Activated CD4-positive, alpha-beta T cell treated with anti-CD3 and anti-CD28 coated beads for 36 hours (primary cell): ENCODE measurements at regions of chr12 and their contacts with region 1.

Region 1: GRCh38 chr12:118404876-118405521 is 28.6 kb downstream of the SUDS3 start:
- DNase-seq: peak; percentile 80
- ATAC-seq: peak; percentile 57
- H3K4me3 Mint-ChIP-seq: no peak overlapping the region
- H3K27ac Mint-ChIP-seq: no peak overlapping the region
- H3K4me1 Mint-ChIP-seq: no peaks in the 10 kb centered on the region
- H3K27me3 Mint-ChIP-seq: no peaks in the 10 kb centered on the region

Region 2: DNA sequence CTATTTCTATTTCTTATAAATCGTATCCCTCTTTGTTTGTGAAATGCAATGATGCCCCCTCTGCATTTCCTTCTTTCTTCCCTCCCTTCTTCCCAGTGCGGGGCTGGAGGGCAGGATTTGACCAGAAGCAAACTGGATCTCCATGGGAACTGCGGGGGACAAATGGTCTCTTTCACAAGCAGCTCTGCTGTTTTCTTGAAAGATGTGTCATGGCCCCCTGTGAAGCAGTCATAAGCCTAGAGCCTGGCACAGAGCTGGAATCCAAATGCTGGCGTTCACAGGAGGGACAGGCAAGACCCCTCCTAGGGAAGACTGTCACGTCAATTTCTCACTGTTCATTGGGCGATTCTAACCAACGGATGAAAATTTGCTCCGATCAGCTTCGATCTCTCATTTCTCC is 840.1 kb before region 1 on chr12:
- CTCF ChIA-PET with region 1: no interaction called
- POLR2A ChIA-PET with region 1: no interaction called
- intact Hi-C with region 1: no loop called
- DNase-seq: no peak
- ATAC-seq: no peak
- H3K4me3 Mint-ChIP-seq: no peak overlapping the region
- H3K27ac Mint-ChIP-seq: no peak overlapping the region
- H3K4me1 Mint-ChIP-seq: no peaks in the 10 kb centered on the region
- H3K27me3 Mint-ChIP-seq: peaks cover 4% of the 10 kb centered on the region

Region 3: DNA sequence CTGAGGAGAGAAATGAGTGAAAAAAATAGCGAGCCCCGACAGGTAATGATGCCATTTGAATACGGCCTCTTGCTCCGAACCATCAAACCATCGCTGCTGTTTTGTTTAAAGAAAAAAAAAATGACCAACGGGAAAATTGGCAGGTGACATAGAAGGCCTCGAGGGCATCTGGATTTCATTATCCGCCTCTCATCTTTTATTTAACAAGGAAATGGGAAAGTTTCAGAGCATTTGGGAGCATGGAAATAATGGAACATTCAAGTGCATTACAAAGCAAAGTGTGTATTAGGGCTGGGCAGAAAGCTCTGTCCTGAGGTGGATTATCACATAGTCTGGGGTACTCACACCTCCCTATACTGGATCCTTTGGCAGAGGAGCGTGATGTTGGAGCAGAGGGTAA is 694.9 kb before region 1 on chr12:
- CTCF ChIA-PET with region 1: no interaction called
- POLR2A ChIA-PET with region 1: no interaction called
- intact Hi-C with region 1: no loop called
- DNase-seq: no peak
- ATAC-seq: no peak
- H3K4me3 Mint-ChIP-seq: no peak overlapping the region
- H3K27ac Mint-ChIP-seq: no peak overlapping the region
- H3K4me1 Mint-ChIP-seq: no peaks in the 10 kb centered on the region
- H3K27me3 Mint-ChIP-seq: no peaks in the 10 kb centered on the region

Region 4: DNA sequence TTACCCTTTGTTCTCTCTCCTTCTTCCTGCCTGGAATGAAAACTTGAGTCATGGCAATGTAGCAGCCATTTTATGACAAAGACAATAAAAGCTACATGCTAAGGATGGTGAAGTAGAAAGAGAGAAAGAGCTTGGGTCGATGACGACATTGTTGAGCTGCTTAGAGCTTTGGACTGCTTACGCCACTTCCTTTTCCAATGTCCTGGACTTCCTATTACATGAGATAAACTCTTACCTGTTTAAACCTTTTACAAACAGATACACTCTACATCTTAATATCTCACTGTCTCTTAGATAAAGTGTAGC is 198.9 kb before region 1 on chr12:
- CTCF ChIA-PET with region 1: no interaction called
- POLR2A ChIA-PET with region 1: no interaction called
- intact Hi-C with region 1: no loop called
- DNase-seq: no peak
- ATAC-seq: peak; percentile 16
- H3K4me3 Mint-ChIP-seq: no peak overlapping the region
- H3K27ac Mint-ChIP-seq: no peak overlapping the region
- H3K4me1 Mint-ChIP-seq: peaks cover 5% of the 10 kb centered on the region
- H3K27me3 Mint-ChIP-seq: no peaks in the 10 kb centered on the region

Region 5: GRCh38 chr12:118391424-118391823 is 13.6 kb before region 1 on chr12:
- CTCF ChIA-PET with region 1: interaction called, 16 read pairs
- POLR2A ChIA-PET with region 1: no interaction called
- intact Hi-C with region 1: no loop called
- DNase-seq: no peak
- ATAC-seq: no peak
- H3K4me3 Mint-ChIP-seq: no peak overlapping the region
- H3K27ac Mint-ChIP-seq: no peak overlapping the region
- H3K4me1 Mint-ChIP-seq: no peaks in the 10 kb centered on the region
- H3K27me3 Mint-ChIP-seq: no peaks in the 10 kb centered on the region

Region 6: GRCh38 chr12:118437011-118437436 is 32.0 kb after region 1 on chr12:
- CTCF ChIA-PET with region 1: no interaction called
- POLR2A ChIA-PET with region 1: no interaction called
- intact Hi-C with region 1: no loop called
- DNase-seq: no peak
- ATAC-seq: no peak
- H3K4me3 Mint-ChIP-seq: no peak overlapping the region
- H3K27ac Mint-ChIP-seq: no peak overlapping the region
- H3K4me1 Mint-ChIP-seq: no peaks in the 10 kb centered on the region
- H3K27me3 Mint-ChIP-seq: peaks cover 2% of the 10 kb centered on the region

Region 7: DNA sequence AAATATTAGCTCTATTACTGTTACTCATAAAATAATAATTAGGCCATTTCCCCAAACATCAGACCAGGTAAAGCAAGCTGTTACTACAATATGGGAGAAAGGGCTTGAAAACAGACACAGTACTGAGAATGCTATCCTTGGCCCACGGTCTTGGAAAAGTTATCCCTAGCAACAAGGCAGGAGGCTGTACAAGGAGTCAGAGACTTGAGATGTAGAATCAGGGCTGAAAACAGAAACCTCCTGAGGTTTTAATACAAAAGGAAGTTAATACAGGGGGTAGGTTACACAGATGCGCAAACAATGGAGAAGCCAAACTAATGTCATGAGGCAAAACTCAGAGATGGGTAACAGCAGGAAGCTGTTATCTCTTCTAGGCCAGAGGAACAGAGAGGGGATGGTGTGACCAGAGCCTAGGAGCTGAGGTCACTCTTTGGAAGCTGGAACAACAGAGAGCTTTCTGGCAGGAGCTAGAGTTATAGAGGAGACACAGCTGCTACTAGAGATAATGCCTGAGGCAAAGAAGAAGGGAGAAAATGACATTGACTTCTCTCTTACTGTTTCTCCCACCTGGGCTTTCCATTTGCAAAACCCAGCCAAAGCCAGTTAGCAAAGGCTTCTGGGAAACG is 220.2 kb after region 1 on chr12:
- CTCF ChIA-PET with region 1: no interaction called
- POLR2A ChIA-PET with region 1: no interaction called
- intact Hi-C with region 1: loop called in 1 of 2 experiments (anchors 5 kb)
- DNase-seq: no peak
- ATAC-seq: no peak
- H3K4me3 Mint-ChIP-seq: no peak overlapping the region
- H3K27ac Mint-ChIP-seq: no peak overlapping the region
- H3K4me1 Mint-ChIP-seq: no peaks in the 10 kb centered on the region
- H3K27me3 Mint-ChIP-seq: peaks cover 1% of the 10 kb centered on the region

Region 8: GRCh38 chr12:118853634-118854033 is 448.6 kb after region 1 on chr12:
- CTCF ChIA-PET with region 1: no interaction called
- POLR2A ChIA-PET with region 1: no interaction called
- intact Hi-C with region 1: loop called in 1 of 2 experiments (anchors 1 kb)
- DNase-seq: peak; percentile 39
- ATAC-seq: peak; percentile 36
- H3K4me3 Mint-ChIP-seq: no peak overlapping the region
- H3K27ac Mint-ChIP-seq: no peak overlapping the region
- H3K4me1 Mint-ChIP-seq: no peaks in the 10 kb centered on the region
- H3K27me3 Mint-ChIP-seq: peaks cover 8% of the 10 kb centered on the region

Region 9: DNA sequence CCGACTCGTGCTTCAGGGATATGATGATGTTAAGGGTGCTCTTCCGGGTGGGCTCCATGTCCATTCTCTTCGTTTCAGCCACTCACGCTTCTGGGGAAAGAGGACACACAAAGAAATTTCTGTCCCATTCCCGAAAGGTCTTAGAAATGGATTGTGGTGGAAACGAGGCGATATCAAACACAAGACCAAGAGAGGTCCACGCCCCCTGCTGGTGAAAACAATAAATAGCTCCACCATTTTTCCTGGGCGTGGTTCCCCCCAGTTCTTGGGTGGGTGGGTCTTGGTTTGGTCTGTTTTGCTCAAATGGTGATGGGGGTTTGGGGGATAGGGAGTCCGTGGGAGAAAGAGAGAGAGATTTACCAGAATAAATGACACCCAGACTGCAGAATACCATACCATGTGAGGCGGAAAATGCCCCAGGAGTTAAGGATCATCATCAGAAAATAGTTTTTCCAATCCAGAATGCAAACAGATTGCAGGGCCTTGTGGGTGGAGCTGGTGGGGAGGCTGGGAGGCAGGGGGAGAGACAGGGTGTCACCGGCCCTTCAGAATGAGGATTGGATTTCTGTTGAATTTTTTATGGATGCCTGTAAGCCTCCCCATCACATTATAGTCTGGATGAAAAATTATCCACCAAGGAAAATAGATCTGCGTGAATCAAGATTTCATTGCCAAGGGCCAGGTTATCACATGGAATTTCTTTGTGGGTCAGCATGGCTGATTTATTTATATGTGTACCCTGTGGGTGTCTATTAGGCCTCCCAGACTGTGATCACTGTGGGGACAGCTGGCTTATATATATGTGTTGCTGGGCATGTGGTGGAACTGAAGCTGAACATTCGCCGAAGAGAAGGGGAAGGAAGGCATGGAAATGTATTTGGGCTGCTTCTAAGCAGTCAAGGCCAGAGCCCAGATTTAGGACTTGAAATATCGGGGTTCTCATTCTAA is 632.2 kb after region 1 on chr12:
- CTCF ChIA-PET with region 1: no interaction called
- POLR2A ChIA-PET with region 1: no interaction called
- intact Hi-C with region 1: loop called (anchors 2 to 10 kb)
- DNase-seq: peak; percentile 32
- ATAC-seq: no peak
- H3K4me3 Mint-ChIP-seq: no peak overlapping the region
- H3K27ac Mint-ChIP-seq: no peak overlapping the region
- H3K4me1 Mint-ChIP-seq: no peaks in the 10 kb centered on the region
- H3K27me3 Mint-ChIP-seq: peaks cover 2% of the 10 kb centered on the region

Region 10: GRCh38 chr12:119412811-119413794 is 1008.1 kb after region 1 on chr12:
- CTCF ChIA-PET with region 1: interaction called, 5 read pairs
- POLR2A ChIA-PET with region 1: no interaction called
- intact Hi-C with region 1: loop called in 1 of 2 experiments (anchors 2 kb)
- DNase-seq: peak; percentile 70
- ATAC-seq: no peak
- H3K4me3 Mint-ChIP-seq: no peak overlapping the region
- H3K27ac Mint-ChIP-seq: no peak overlapping the region
- H3K4me1 Mint-ChIP-seq: no peaks in the 10 kb centered on the region
- H3K27me3 Mint-ChIP-seq: peaks cover 18% of the 10 kb centered on the region

Region 11: GRCh38 chr12:119544765-119545625 is 1140.0 kb after region 1 on chr12:
- CTCF ChIA-PET with region 1: interaction called, 4 read pairs
- POLR2A ChIA-PET with region 1: no interaction called
- intact Hi-C with region 1: loop called in 1 of 2 experiments (anchors 5 kb)
- DNase-seq: peak; percentile 72
- ATAC-seq: peak; percentile 64
- H3K4me3 Mint-ChIP-seq: no peak overlapping the region
- H3K27ac Mint-ChIP-seq: no peak overlapping the region
- H3K4me1 Mint-ChIP-seq: no peaks in the 10 kb centered on the region
- H3K27me3 Mint-ChIP-seq: peaks cover 29% of the 10 kb centered on the region